K562 (cell line): ENCODE measurements at regions of chr1 and their contacts with region 1.

Region 1: DNA sequence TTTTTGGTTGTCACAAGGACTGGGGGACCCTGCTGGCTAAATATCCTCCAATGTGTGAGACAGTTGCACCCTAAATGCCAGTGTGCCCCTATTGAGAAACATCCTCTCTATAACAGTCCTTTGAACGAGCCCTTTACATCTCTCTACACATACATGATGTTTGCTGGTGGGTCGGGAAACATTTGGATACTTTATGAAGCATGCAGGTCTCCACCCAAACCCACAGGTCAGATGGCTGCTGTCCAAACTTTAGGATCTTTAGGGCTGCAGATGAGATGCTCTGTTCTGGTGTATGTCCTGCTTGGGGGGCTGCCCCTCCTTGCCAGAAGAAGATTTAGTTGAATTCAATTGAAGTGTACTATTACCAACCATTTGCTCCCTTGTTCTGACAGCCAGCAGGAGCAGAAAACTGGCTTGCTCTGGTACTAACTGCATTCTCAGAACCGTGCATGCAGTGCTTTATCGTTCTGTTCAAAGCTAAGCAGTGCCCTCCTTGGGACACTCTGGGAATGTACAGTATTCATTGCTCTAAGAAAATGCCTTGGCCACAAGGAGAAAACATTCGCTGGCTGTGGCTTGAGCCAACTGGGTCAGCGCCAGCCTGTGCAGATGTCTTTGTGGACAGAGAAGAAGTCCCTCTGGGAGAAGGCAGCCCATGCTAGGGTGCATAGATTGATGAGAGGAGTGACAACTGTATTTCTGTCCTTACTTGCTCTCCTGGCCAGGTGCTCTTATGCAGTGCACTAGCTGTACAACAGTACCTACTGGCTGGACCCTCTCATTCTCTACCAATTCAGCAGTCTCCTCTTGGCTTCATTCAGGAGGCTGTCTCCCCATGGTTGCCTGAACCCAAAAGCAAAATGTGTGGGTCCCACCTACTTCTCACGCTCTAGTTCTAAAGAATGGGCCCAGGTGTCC is 61.4 kb upstream of the DIRAS3 start:
- DNase-seq: peak in 2 of 4 experiments; percentile 42 to 51
- ATAC-seq: peak; percentile 93
- H3K4me3 ChIP-seq: no peak overlapping the region
- H3K27ac ChIP-seq: no peak overlapping the region
- H3K4me1 ChIP-seq: no peaks in the 10 kb centered on the region
- H3K27me3 ChIP-seq: no peaks in the 10 kb centered on the region; a peak in 1 of 5 replicates
- CTCF ChIP-seq: peak; percentile 71 to 84 (median 74)
- EP300 ChIP-seq: no peak
- POLR2A ChIP-seq: no peak
- RAD21 ChIP-seq: peak; percentile 97

Region 2: DNA sequence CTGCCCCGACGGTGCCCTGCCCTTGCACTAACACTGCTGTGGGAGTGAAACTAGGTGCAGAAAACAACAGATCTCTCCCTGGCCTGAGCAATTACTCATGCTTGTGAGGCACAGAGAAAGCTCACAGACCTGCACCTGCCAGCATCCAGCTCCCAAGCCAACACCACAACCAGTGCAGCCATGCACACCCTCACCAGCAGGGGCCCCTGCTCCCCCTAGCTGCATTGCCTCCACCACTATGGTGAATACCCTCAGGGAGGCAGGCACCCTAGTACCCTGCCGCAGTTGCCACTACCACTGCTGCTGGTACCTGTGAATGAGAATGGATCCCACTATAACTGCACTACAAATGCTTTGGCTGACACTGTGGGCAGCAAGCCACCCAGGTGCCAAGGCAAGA is 54.2 kb before region 1 on chr1:
- CTCF ChIA-PET with region 1: no interaction called
- POLR2A ChIA-PET with region 1: no interaction called
- in situ Hi-C with region 1: no loop called
- intact Hi-C with region 1: loop called (anchors 5 kb)
- DNase-seq: no peak
- ATAC-seq: peak; percentile 95
- H3K4me3 ChIP-seq: no peak overlapping the region
- H3K27ac ChIP-seq: no peak overlapping the region
- H3K4me1 ChIP-seq: no peaks in the 10 kb centered on the region
- H3K27me3 ChIP-seq: no peaks in the 10 kb centered on the region
- CTCF ChIP-seq: peak in 2 of 3 experiments; percentile 26 to 64; a peak in 3 of 6 replicates
- EP300 ChIP-seq: no peak
- POLR2A ChIP-seq: no peak
- RAD21 ChIP-seq: no peak; a peak in 1 of 4 replicates